ENCODE measurements at regions of chr16 and their contacts with region 1.

Region 1: DNA sequence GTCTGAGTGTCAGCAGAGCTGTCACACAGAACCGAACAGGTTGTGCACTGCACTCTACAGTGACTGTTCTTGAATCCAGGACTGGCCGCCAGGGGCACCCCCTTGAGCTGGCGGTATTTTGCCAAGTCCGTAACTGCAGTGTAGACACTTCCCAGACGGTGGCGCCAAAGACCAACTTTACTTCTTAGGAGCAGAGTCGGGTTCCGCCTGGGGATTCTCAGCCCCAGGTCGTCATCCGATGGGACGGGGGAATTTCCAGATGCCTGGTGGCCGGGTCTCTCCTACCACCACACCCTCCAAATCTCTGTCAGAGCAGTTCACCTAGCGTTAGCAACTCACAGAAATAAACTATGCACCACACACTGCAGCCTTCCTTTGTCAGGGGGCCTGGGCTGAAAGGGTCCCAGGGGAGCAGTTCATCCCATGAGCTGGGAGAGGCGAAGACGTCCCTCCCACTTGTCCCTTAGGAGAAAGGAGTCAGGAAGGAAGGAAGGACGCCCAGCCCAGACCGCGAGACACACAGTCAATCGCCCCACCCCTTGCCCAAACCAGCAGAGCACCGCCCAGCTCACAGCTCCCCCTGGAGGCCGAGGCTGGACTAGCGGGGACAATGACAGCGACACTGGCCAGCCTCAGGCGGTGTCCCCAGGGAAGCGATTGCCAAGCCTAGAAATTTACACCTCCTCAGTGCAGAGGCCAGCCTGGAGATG is 7.4 kb upstream of the RIPOR1 start:
- DNase-seq: peak; percentile 91 to 99
- H3K4me3 ChIP-seq: peak overlapping the region; percentile 22 to 62 (median 50); a peak in 7 of 8 replicates
- H3K27ac ChIP-seq: peak overlapping the region; percentile 46; the same call in 1 of the 2 replicates
- H3K4me1 ChIP-seq: no peaks in the 10 kb centered on the region
- H3K27me3 ChIP-seq: peaks cover 5 to 44% (median 34%) of the 10 kb centered on the region in 4 experiments
- CTCF ChIP-seq: peak; percentile 99 to 100 (median 99)
- EP300 ChIP-seq: 0 out of 3 replicates have a peak, but pooled peaks of 1 of the 2 experiments have one; percentile 26
- POLR2A ChIP-seq: 0 out of 3 replicates have a peak, but pooled peaks of 1 of the 2 experiments have one; percentile 45
- RAD21 ChIP-seq: peak; percentile 93 to 95

Region 2: DNA sequence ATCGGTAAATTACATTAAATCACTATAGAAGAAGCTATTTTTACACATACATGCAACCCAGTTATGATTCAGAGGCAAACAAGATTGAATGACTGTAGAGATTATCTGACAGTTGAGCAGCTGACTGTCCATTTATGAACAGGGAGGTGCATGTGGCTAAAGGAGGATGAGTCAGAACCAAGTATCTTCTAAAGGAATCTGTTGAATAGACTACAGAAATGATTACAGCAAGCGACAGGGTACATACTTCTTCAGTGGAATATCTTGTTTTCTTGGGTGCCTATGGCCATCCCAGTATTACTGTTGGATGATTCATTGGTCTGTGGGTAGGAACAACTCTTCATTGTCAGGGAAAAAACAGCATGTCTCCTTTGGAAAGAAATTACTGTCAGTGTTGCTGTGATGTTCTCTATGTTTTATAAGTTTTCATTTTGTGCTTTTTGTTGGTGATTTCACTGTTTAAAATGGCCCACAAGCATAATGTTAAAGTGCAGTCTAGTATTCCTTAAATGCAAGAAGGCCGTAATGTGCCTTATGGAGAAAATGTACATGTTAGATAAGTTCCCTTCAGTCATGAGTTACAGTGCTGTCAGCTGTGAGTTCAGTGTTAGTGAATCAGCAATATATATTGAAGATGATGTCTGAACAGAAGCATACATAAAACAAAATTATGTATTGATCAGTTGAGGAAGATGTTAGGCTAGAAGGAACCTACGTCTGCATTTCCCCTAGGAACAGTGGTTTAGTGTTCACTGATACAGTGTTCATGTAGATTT is 465.4 kb before region 1 on chr16:
- CTCF ChIA-PET with region 1: no interaction called
- POLR2A ChIA-PET with region 1: no interaction called
- DNase-seq: no peak
- H3K4me3 ChIP-seq: no peak overlapping the region
- H3K27ac ChIP-seq: no peak overlapping the region
- H3K4me1 ChIP-seq: no peaks in the 10 kb centered on the region
- H3K27me3 ChIP-seq: no peaks in the 10 kb centered on the region
- CTCF ChIP-seq: no peak
- EP300 ChIP-seq: no peak
- POLR2A ChIP-seq: no peak
- RAD21 ChIP-seq: no peak

Region 3: GRCh38 chr16:67447508-67448076 is 73.7 kb before region 1 on chr16:
- CTCF ChIA-PET with region 1: interaction called, 12 read pairs
- POLR2A ChIA-PET with region 1: no interaction called
- DNase-seq: peak in 1 of 2 experiments; percentile 77
- H3K4me3 ChIP-seq: no peak overlapping the region
- H3K27ac ChIP-seq: no peak overlapping the region
- H3K4me1 ChIP-seq: peaks cover 0 to 8% (median 4%) of the 10 kb centered on the region in 4 experiments; a peak in 5 of 7 replicates
- H3K27me3 ChIP-seq: no peaks in the 10 kb centered on the region
- CTCF ChIP-seq: peak; percentile 57 to 63 (median 59)
- EP300 ChIP-seq: no peak
- POLR2A ChIP-seq: no peak
- RAD21 ChIP-seq: peak; percentile 40 to 66; a peak in 3 of 4 replicates

Region 4: GRCh38 chr16:67504041-67505021 is 16.9 kb before region 1 on chr16:
- CTCF ChIA-PET with region 1: interaction called, 335 read pairs
- POLR2A ChIA-PET with region 1: interaction called, 3 read pairs
- DNase-seq: no peak
- H3K4me3 ChIP-seq: no peak overlapping the region
- H3K27ac ChIP-seq: no peak overlapping the region
- H3K4me1 ChIP-seq: peaks cover 0 to 4% (median 2%) of the 10 kb centered on the region in 4 experiments; a peak in 3 of 7 replicates
- H3K27me3 ChIP-seq: peaks cover 0 to 2% (median 0%) of the 10 kb centered on the region in 4 experiments; a peak in 4 of 7 replicates
- CTCF ChIP-seq: no peak
- EP300 ChIP-seq: no peak
- POLR2A ChIP-seq: no peak
- RAD21 ChIP-seq: no peak

Region 5: GRCh38 chr16:67561824-67562525 is 40.7 kb after region 1 on chr16:
- CTCF ChIA-PET with region 1: interaction called, 46 read pairs
- POLR2A ChIA-PET with region 1: interaction called, 6 read pairs
- DNase-seq: peak; percentile 72 to 93
- H3K4me3 ChIP-seq: peak overlapping the region; percentile 76 to 88 (median 82)
- H3K27ac ChIP-seq: peak overlapping the region; percentile 96
- H3K4me1 ChIP-seq: peaks cover 0 to 7% (median 1%) of the 10 kb centered on the region in 4 experiments; a peak in 4 of 7 replicates
- H3K27me3 ChIP-seq: no peaks in the 10 kb centered on the region
- CTCF ChIP-seq: no peak
- EP300 ChIP-seq: peak in 1 of 2 experiments; percentile 9; a peak in 1 of 3 replicates
- POLR2A ChIP-seq: peak; percentile 49 to 79
- RAD21 ChIP-seq: no peak

Region 6: DNA sequence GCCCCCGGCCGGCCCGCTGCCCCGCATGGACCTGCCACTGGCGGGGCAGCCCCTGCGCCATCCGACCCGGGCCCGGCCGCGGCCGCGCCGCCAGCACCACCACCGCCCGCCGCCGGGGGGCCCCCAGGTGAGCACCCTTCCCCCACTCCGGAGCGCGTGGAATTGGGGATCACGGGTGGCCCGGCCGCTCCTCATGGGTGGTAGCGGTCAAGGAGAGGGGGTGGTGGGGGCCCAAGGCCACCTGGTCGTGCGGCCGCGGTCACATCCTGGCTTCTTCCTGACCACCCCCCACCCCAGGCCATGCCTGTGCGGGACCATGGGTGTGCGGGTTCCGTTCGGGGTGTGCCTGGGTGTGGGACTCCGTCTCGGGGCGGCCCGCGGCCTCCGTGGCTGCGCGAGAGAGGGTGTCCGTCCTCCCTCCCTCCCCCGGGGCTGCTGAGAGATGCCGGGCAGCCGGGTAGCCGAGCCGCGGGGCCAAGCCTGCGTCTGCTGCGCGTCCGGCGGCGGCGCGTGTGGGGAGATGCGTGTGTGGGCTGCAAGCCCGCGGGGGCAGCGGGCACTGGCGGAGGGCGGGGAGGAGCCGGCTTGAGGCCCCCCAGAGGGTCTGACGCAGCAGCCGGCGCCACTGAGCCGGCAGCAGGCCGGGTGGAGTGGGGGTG is 132.0 kb after region 1 on chr16:
- CTCF ChIA-PET with region 1: interaction called, 164 read pairs
- POLR2A ChIA-PET with region 1: no interaction called
- DNase-seq: no peak
- H3K4me3 ChIP-seq: peak overlapping the region; percentile 47 to 76 (median 58)
- H3K27ac ChIP-seq: no peak overlapping the region
- H3K4me1 ChIP-seq: peaks cover 0 to 18% (median 5%) of the 10 kb centered on the region in 4 experiments; a peak in 5 of 7 replicates
- H3K27me3 ChIP-seq: peaks cover 0 to 23% (median 17%) of the 10 kb centered on the region in 4 experiments; a peak in 4 of 7 replicates
- CTCF ChIP-seq: peak; percentile 14 to 40 (median 24); a peak in 3 of 4 replicates
- EP300 ChIP-seq: no peak
- POLR2A ChIP-seq: no peak
- RAD21 ChIP-seq: no peak

Region 7: GRCh38 chr16:67672739-67673662 is 151.8 kb after region 1 on chr16:
- CTCF ChIA-PET with region 1: interaction called, 72 read pairs
- POLR2A ChIA-PET with region 1: interaction called, 5 read pairs
- DNase-seq: peak in 1 of 2 experiments; percentile 87
- H3K4me3 ChIP-seq: no peak overlapping the region
- H3K27ac ChIP-seq: no peak overlapping the region
- H3K4me1 ChIP-seq: peaks cover 0 to 5% (median 2%) of the 10 kb centered on the region in 4 experiments; a peak in 3 of 7 replicates
- H3K27me3 ChIP-seq: no peaks in the 10 kb centered on the region; a peak in 1 of 7 replicates
- CTCF ChIP-seq: peak; percentile 76 to 90 (median 89)
- EP300 ChIP-seq: no peak
- POLR2A ChIP-seq: no peak
- RAD21 ChIP-seq: peak; percentile 92 to 94

Measured in H1 (cell line).